Psoas muscle (tissue), 8 donors: ENCODE measurements at regions of chr1 and their contacts with region 1.

Region 1: GRCh38 chr1:13699936-13700520 is at the start of gene PRDM2:
- DNase-seq: peak; percentile 60 to 72
- ATAC-seq: peak; percentile 76 to 80 (median 78)
- H3K4me3 ChIP-seq: peak within 1 kb of the TSS; percentile 79
- H3K27ac ChIP-seq: peak within 1 kb of the TSS; percentile 84
- H3K4me1 ChIP-seq: peaks cover 7% of the 10 kb centered on the region
- H3K27me3 ChIP-seq: peaks cover 0 to 6% (median 0%) of the 10 kb centered on the region in 3 donors
- CTCF ChIP-seq: no peak
- total RNA-seq, gene PRDM2: 29.4 to 84.3 (median 45.5) TPM

Region 2: DNA sequence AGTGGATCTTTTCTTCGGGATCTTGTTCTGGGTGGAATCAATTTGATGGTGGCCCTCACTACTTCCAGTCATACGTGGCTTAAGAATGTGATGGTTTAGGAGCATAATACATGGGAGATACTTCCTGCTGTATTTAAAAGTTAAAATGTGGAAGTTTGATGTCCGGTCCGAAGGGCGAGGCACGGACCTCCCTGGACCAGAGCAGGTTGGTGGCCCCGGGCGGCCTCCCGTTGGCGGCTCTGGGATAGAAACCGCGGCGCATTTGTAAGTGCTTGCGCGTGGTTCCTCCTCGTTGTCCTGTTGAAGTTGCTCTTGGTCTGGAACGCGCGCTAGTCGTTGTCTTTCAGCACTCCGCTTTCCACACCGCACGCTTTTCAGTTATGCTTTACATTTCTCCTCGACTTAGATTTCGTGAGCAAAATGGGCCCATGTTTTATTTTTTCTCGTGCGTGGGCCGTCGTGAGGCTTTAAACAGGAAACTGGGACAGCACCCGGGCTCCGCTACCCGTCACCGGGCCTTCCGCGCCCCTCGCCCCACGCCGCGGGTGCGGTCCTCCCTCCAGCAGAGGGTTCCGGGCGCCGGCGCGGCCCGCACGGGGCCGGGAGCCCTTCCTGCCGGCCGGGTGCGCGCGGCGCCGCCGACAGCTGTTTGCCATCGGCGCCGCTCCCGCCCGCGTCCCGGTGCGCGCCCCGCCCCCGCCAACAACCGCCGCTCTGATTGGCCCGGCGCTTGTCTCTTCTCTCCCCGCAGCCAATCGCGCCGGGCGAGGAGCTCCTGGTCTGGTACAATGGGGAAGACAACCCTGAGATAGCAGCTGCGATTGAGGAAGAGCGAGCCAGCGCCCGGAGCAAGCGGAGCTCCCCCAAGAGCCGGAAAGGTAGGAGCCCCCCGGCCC is 48.8 kb after region 1 on chr1:
- intact Hi-C with region 1: loop called in 1 of 2 experiments (anchors 5 kb)
- DNase-seq: peak; percentile 99
- ATAC-seq: peak; percentile 94 to 96 (median 96)
- H3K4me3 ChIP-seq: peak overlapping the region; percentile 92
- H3K27ac ChIP-seq: peak overlapping the region; percentile 93
- H3K4me1 ChIP-seq: peaks cover 39% of the 10 kb centered on the region
- H3K27me3 ChIP-seq: no peaks in the 10 kb centered on the region
- CTCF ChIP-seq: no peak